CD14-positive monocyte (primary cell): ENCODE measurements at regions of chr22 and their contacts with region 1.

Region 1: DNA sequence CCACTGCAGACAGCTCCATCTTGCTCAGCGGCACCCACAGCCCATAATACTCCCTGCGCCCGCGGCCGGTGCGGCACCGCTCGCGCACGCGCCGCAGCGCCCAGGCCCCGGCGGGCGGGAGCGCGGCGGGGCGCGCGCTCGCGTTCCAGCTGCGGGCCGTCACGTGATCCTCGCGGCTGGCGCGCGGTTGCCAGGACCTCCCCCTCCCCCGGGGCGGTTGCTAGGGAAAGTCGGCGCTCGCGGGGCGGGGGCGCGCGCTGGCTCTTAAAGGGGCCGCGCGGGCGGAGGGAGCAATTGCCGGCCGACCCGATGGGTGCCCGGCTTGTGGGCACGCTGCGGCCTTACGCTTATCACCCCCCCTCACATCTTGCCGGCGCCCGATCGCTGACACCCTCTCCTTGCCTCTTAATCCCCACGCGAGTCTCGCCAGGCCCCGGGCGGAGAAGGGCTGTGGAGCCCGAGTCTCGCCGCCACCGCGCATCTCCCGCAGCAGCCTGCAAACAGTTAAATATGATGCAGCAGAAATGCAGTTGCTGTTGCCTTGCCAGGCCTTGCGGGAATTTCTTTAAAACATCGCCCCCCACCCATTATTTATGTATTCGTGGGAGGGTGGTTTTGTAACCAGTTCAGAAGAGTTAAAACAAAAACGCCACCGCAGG is at the start of gene CBX6:
- DNase-seq: peak; percentile 86 to 91 (median 87)
- H3K4me3 ChIP-seq: peak within 1 kb of the TSS; percentile 90 to 95 (median 93)
- H3K4me3 Mint-ChIP-seq: peak within 1 kb of the TSS; percentile 95
- H3K27ac ChIP-seq: peak within 1 kb of the TSS; percentile 63 to 75
- H3K27ac Mint-ChIP-seq: peak within 1 kb of the TSS; percentile 87 to 97 (median 92)
- H3K4me1 ChIP-seq: peaks cover 29 to 43% of the 10 kb centered on the region in 2 donors
- H3K4me1 Mint-ChIP-seq: peaks cover 32% of the 10 kb centered on the region
- H3K27me3 ChIP-seq: peaks cover 0 to 16% of the 10 kb centered on the region in 2 donors
- H3K27me3 Mint-ChIP-seq: peaks cover 9 to 27% (median 24%) of the 10 kb centered on the region in 3 donors
- CTCF ChIP-seq: no peak
- polyA plus RNA-seq, gene CBX6: 2.1 to 26.7 (median 5.0) TPM

Region 2: DNA sequence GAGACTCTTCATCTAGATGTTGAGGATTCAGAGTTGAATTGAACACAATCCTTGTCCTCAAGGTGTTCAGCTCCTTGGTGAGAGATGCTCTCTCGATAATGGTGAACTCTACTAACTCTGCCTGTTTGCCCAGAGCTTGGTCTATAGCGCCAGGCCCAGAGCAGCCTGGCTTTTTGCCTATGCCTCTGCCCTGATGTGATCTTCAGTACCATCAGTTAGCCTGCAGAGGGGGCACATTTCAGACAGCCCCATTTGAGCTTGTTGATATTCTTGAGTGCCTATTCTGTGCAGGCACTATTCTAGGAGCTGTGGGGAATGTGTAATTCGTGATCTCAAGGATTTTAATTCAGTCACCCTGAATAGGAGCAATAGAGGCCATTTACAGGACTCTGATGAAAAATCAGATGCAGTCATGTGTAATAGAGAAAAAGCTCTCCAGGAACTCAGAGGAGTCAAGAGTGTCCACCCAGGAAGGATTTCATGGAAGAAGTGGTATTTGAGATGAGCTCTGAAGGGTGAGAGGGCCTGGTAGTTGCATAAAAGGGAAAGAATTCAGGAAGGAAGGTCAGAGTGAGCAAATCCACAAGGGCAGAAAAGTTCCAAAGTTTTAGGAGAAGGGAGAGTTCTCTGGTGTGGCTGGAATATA is 147.3 kb before region 1 on chr22:
- intact Hi-C with region 1: no loop called
- DNase-seq: peak in 2 of 3 donors; percentile 33 to 36
- H3K4me3 ChIP-seq: no peak overlapping the region
- H3K4me3 Mint-ChIP-seq: no peak overlapping the region
- H3K27ac ChIP-seq: no peak overlapping the region
- H3K27ac Mint-ChIP-seq: peak overlapping the region in 1 of 7 donors; percentile 55
- H3K4me1 ChIP-seq: no peaks in the 10 kb centered on the region
- H3K4me1 Mint-ChIP-seq: no peaks in the 10 kb centered on the region
- H3K27me3 ChIP-seq: no peaks in the 10 kb centered on the region
- H3K27me3 Mint-ChIP-seq: peaks cover 0 to 1% (median 0%) of the 10 kb centered on the region in 3 donors
- CTCF ChIP-seq: peak; percentile 69

Region 3: GRCh38 chr22:38953577-38954413 is 81.5 kb after region 1 on chr22:
- intact Hi-C with region 1: loop called in 1 of 2 experiments (anchors 5 kb)
- DNase-seq: peak; percentile 98 to 99 (median 99)
- H3K4me3 ChIP-seq: peak overlapping the region; percentile 3 to 71 (median 30)
- H3K4me3 Mint-ChIP-seq: peak overlapping the region; percentile 82 to 95
- H3K27ac ChIP-seq: peak overlapping the region; percentile 95 to 100
- H3K27ac Mint-ChIP-seq: peak overlapping the region; percentile 99 to 100 (median 100)
- H3K4me1 ChIP-seq: peaks cover 84 to 94% of the 10 kb centered on the region in 2 donors
- H3K4me1 Mint-ChIP-seq: peaks cover 87% of the 10 kb centered on the region
- H3K27me3 ChIP-seq: no peaks in the 10 kb centered on the region
- H3K27me3 Mint-ChIP-seq: peaks cover 0 to 13% (median 1%) of the 10 kb centered on the region in 3 donors
- CTCF ChIP-seq: no peak

Region 4: GRCh38 chr22:39003165-39003638 is 130.9 kb after region 1 on chr22:
- intact Hi-C with region 1: loop called (anchors 1 to 10 kb)
- DNase-seq: peak; percentile 82 to 86 (median 86)
- H3K4me3 ChIP-seq: no peak overlapping the region
- H3K4me3 Mint-ChIP-seq: no peak overlapping the region
- H3K27ac ChIP-seq: no peak overlapping the region
- H3K27ac Mint-ChIP-seq: peak overlapping the region in 4 of 7 donors; percentile 13 to 79 (median 43)
- H3K4me1 ChIP-seq: peaks cover 8 to 10% of the 10 kb centered on the region in 2 donors
- H3K4me1 Mint-ChIP-seq: peaks cover 14% of the 10 kb centered on the region
- H3K27me3 ChIP-seq: no peaks in the 10 kb centered on the region
- H3K27me3 Mint-ChIP-seq: peaks cover 13 to 20% (median 14%) of the 10 kb centered on the region in 3 donors
- CTCF ChIP-seq: peak; percentile 70

Region 5: DNA sequence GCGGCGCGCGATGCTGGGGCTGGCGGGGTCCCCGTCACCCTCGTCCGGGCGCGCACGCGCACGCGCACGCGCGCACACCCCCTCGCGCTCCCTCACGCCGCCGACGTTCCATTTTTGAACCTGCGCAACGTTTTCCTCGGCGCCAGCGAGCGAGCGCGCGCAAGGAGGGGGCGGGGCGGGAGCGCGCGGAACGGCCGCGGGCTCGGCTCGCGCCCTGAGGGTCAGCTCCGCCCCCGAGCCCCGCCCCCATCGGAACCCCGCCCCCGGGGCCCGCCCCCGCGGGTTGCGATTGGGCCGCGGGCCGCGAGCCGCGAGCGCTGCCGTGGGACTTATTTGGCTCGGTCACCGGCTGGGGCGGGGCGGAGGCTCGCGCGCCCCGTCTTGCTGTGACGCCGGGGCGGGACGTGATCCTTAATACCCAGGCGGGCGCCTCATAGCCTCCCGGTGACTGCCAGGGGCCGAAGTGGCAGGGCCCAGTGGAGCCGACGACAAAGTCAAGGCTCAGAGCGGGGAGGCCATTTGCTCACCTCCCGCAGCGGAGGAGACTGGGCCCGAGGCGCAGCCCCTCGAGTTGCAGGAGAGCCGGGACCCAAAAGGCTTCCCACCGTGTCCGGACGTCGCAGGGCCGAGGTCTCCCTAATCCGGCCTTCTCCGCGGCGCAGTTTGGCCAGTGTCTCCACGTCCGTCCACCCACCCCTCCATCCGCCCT is 280.4 kb after region 1 on chr22 and contains the start of gene CBX7:
- intact Hi-C with region 1: loop called in 1 of 2 experiments (anchors 2 kb)
- DNase-seq: peak; percentile 87 to 91 (median 89)
- H3K4me3 ChIP-seq: peak within 1 kb of the TSS; percentile 64 to 86 (median 84)
- H3K4me3 Mint-ChIP-seq: peak within 1 kb of the TSS; percentile 80 to 90
- H3K27ac ChIP-seq: peak within 1 kb of the TSS in 1 of 2 donors; percentile 56
- H3K27ac Mint-ChIP-seq: peak within 1 kb of the TSS in 6 of 7 donors; percentile 37 to 84 (median 72)
- H3K4me1 ChIP-seq: peaks cover 18 to 25% of the 10 kb centered on the region in 2 donors
- H3K4me1 Mint-ChIP-seq: peaks cover 25% of the 10 kb centered on the region
- H3K27me3 ChIP-seq: peaks cover 19 to 35% of the 10 kb centered on the region in 2 donors
- H3K27me3 Mint-ChIP-seq: peaks cover 36 to 44% (median 38%) of the 10 kb centered on the region in 3 donors
- CTCF ChIP-seq: no peak
- polyA plus RNA-seq, gene CBX7: 3.1 to 18.0 (median 4.0) TPM